Colonic mucosa (tissue), 4 donors: ENCODE measurements at regions of chr6 and their contacts with region 1.

Region 1: DNA sequence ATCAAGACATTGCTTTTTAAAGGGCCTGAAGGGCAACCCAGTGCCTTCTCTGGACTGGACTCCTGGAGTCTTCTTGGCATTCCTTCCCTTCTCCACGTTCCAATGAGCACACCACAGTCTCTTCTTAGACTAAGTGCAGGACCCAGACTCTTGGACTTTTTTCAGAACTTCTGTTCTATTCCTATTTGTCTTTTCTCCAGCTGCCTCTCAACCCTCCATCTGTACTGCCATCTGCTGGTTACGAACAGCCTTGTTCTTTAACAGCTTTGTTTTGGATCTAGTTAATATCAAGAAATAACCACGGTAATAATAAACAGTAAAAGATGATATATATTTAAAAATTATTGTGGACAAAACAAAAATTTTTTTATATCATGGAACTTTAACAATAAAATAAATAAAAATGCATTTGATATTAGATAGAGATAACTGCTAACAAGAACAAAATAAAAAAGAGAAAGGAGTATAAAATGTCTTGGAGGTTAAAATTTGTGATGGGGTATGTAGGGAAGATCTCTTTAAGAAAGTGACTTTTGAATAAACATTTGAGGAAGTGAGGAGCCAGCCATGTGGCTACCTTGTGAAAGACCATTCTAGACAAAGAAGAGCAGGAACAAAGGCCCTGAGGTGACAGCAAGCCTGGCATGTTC is 105.1 kb upstream of the HCRTR2 start:
- DNase-seq: peak; percentile 67
- H3K4me3 ChIP-seq: no peak overlapping the region
- H3K27ac ChIP-seq: no peak overlapping the region
- H3K4me1 ChIP-seq: no peaks in the 10 kb centered on the region
- H3K27me3 ChIP-seq: no peaks in the 10 kb centered on the region
- CTCF ChIP-seq: peak; percentile 46

Region 2: DNA sequence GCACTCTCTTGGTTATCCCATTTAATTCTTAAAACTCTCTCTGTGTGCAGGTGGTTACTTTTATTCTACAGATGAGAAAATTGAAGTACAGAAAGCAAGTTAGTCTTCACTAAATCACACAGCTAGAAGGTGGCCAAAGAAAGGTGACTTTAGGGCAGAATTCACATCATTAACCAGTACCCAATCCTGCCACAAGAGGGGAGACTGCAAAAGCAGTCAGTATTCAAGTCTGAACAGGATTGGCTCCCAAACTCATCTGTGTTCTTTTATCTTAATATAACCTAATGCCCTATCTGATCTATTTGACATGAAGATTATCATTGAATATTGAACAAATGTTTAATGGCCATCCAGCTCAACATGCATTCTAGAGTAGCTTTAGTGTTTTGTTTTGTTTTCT is 448.0 kb before region 1 on chr6:
- intact Hi-C with region 1: loop called (anchors 5 kb)
- DNase-seq: no peak
- H3K4me3 ChIP-seq: no peak overlapping the region
- H3K27ac ChIP-seq: no peak overlapping the region
- H3K4me1 ChIP-seq: no peaks in the 10 kb centered on the region
- H3K27me3 ChIP-seq: no peaks in the 10 kb centered on the region
- CTCF ChIP-seq: no peak

Region 3: GRCh38 chr6:54717849-54718455 is 351.3 kb before region 1 on chr6:
- intact Hi-C with region 1: loop called (anchors 10 kb)
- DNase-seq: peak; percentile 94
- H3K4me3 ChIP-seq: no peak overlapping the region
- H3K27ac ChIP-seq: peak overlapping the region; percentile 60
- H3K4me1 ChIP-seq: no peaks in the 10 kb centered on the region
- H3K27me3 ChIP-seq: no peaks in the 10 kb centered on the region
- CTCF ChIP-seq: peak; percentile 85

Region 4: DNA sequence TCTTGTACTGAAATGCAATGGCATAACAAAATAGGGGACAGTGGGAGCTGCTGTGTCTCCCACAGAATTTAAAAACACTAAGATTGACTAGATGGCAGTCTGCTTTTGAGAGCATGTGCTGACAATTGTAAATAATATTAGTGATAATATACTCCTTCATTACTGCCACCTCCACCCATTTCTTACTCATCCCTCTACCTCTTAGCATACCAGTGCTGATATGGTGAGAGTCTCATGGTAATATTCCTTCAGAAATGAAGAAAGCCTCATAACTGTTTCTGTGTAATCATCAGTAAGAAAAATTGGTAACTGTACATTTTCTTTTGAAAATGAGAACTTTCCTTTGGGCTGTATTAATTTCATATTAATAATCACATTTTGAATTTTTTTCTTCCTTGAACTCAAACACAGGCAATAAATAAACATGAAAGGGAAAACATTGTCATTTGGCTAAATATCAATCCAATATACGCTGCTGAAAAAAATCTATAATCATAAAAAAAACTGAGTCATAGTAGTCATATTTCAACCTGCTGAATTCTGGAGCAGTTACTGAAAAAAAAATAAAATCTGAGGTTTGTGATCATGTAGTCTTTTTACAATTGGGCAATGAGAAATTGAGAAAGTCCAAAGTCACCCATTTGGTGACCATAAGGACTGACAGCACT is 188.1 kb before region 1 on chr6:
- intact Hi-C with region 1: no loop called
- DNase-seq: no peak
- H3K4me3 ChIP-seq: no peak overlapping the region
- H3K27ac ChIP-seq: no peak overlapping the region
- H3K4me1 ChIP-seq: no peaks in the 10 kb centered on the region
- H3K27me3 ChIP-seq: no peaks in the 10 kb centered on the region
- CTCF ChIP-seq: no peak

Region 5: DNA sequence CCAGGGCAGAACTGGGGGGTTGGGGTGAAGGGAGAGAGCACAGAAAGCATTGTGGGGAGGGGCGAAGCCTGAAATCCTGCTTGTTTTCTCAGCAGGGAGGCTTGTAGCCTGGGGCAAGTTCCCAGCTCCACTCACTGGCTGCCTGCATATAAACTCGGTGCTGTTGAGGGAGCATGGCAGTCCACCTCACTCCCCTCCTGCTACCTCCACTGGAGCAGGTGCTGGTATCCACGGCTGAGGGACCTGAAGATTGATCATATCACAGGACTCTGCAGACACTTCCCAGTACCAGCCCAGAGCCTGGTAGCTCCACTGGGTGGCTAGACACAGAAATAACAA is 39.5 kb after region 1 on chr6:
- intact Hi-C with region 1: no loop called
- DNase-seq: no peak
- H3K4me3 ChIP-seq: no peak overlapping the region
- H3K27ac ChIP-seq: no peak overlapping the region
- H3K4me1 ChIP-seq: no peaks in the 10 kb centered on the region
- H3K27me3 ChIP-seq: no peaks in the 10 kb centered on the region
- CTCF ChIP-seq: no peak